SK-N-SH (cell line): ENCODE measurements at regions of chr2 and their contacts with region 1.

Region 1: GRCh38 chr2:231104115-231104713 is 20.6 kb downstream of the HTR2B start:
- DNase-seq: peak; percentile 42
- H3K4me3 ChIP-seq: no peak overlapping the region
- H3K27ac ChIP-seq: peak overlapping the region; percentile 54 to 60; a peak in 2 of 4 replicates
- H3K4me1 ChIP-seq: peaks cover 0 to 4% of the 10 kb centered on the region in 2 experiments; a peak in 2 of 4 replicates
- H3K27me3 ChIP-seq: no peaks in the 10 kb centered on the region
- CTCF ChIP-seq: peak; percentile 89
- EP300 ChIP-seq: no peak
- RAD21 ChIP-seq: peak; percentile 95

Region 2: DNA sequence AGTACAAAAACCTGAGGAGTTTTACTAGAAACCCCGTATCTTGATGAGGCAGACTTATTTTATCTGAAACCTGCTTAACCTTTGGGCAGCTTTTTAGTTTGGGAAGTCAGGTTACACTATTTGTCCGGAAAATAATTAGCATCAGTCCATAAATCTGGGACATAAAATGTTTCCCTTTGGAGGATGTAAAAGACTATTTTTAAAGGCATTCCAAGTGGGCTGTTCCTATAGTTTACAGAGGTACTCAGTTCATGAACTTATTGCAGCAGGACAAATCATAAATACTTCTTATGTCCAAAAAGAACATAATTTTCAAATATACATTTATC is 14.4 kb after region 1 on chr2:
- CTCF ChIA-PET with region 1: interaction called, 15 read pairs
- POLR2A ChIA-PET with region 1: no interaction called
- DNase-seq: no peak
- H3K4me3 ChIP-seq: no peak overlapping the region
- H3K27ac ChIP-seq: no peak overlapping the region
- H3K4me1 ChIP-seq: peaks cover 9 to 12% of the 10 kb centered on the region in 2 experiments; a peak in 3 of 4 replicates
- H3K27me3 ChIP-seq: no peaks in the 10 kb centered on the region
- CTCF ChIP-seq: no peak
- EP300 ChIP-seq: no peak
- RAD21 ChIP-seq: no peak

Region 3: GRCh38 chr2:231124838-231125568 is 20.8 kb after region 1 on chr2 and contains the start of gene HTR2B:
- CTCF ChIA-PET with region 1: interaction called, 15 read pairs
- POLR2A ChIA-PET with region 1: no interaction called
- DNase-seq: peak; percentile 62
- H3K4me3 ChIP-seq: peak within 1 kb of the TSS; percentile 12 to 42; a peak in 2 of 4 replicates
- H3K27ac ChIP-seq: peak within 1 kb of the TSS; percentile 62 to 94
- H3K4me1 ChIP-seq: peaks cover 34 to 37% of the 10 kb centered on the region in 2 experiments; a peak in 3 of 4 replicates
- H3K27me3 ChIP-seq: no peaks in the 10 kb centered on the region
- CTCF ChIP-seq: no peak
- EP300 ChIP-seq: peak in 1 of 2 experiments; percentile 51; a peak in 1 of 4 replicates
- RAD21 ChIP-seq: peak; percentile 20; the same call in 1 of the 2 replicates
- polyA plus RNA-seq, gene HTR2B: 0.25 and 0.41 TPM in 2 replicates

Region 4: GRCh38 chr2:231191896-231192872 is 88.0 kb after region 1 on chr2:
- CTCF ChIA-PET with region 1: interaction called, 162 read pairs
- POLR2A ChIA-PET with region 1: interaction called, 5 read pairs
- DNase-seq: peak; percentile 89
- H3K4me3 ChIP-seq: no peak overlapping the region
- H3K27ac ChIP-seq: peak overlapping the region; percentile 29 to 70; a peak in 3 of 4 replicates
- H3K4me1 ChIP-seq: peaks cover 7 to 15% of the 10 kb centered on the region in 2 experiments; a peak in 1 of 4 replicates
- H3K27me3 ChIP-seq: no peaks in the 10 kb centered on the region
- CTCF ChIP-seq: peak; percentile 81
- EP300 ChIP-seq: peak in 1 of 2 experiments; percentile 36; a peak in 1 of 4 replicates
- RAD21 ChIP-seq: peak; percentile 94

Region 5: GRCh38 chr2:231198291-231199173 is 94.3 kb after region 1 on chr2 and contains the start of gene ARMC9:
- CTCF ChIA-PET with region 1: interaction called, 162 read pairs
- POLR2A ChIA-PET with region 1: no interaction called
- DNase-seq: peak; percentile 99
- H3K4me3 ChIP-seq: peak within 1 kb of the TSS; percentile 77 to 83
- H3K27ac ChIP-seq: peak within 1 kb of the TSS; percentile 76 to 90
- H3K4me1 ChIP-seq: peaks cover 10 to 17% of the 10 kb centered on the region in 2 experiments; a peak in 2 of 4 replicates
- H3K27me3 ChIP-seq: no peaks in the 10 kb centered on the region
- CTCF ChIP-seq: no peak
- EP300 ChIP-seq: peak in 1 of 2 experiments; percentile 14; a peak in 1 of 4 replicates
- RAD21 ChIP-seq: no peak
- polyA plus RNA-seq, gene ARMC9: 25.3 and 38.5 TPM in 2 replicates

Region 6: GRCh38 chr2:231222318-231223055 is 118.3 kb after region 1 on chr2:
- CTCF ChIA-PET with region 1: interaction called, 27 read pairs
- POLR2A ChIA-PET with region 1: no interaction called
- DNase-seq: no peak
- H3K4me3 ChIP-seq: no peak overlapping the region
- H3K27ac ChIP-seq: no peak overlapping the region
- H3K4me1 ChIP-seq: no peaks in the 10 kb centered on the region
- H3K27me3 ChIP-seq: no peaks in the 10 kb centered on the region
- CTCF ChIP-seq: no peak
- EP300 ChIP-seq: no peak
- RAD21 ChIP-seq: no peak

Region 7: GRCh38 chr2:231452799-231453508 is 348.7 kb after region 1 on chr2:
- CTCF ChIA-PET with region 1: interaction called, 10 read pairs
- POLR2A ChIA-PET with region 1: no interaction called
- DNase-seq: no peak
- H3K4me3 ChIP-seq: no peak overlapping the region
- H3K27ac ChIP-seq: no peak overlapping the region
- H3K4me1 ChIP-seq: no peaks in the 10 kb centered on the region
- H3K27me3 ChIP-seq: no peaks in the 10 kb centered on the region
- CTCF ChIP-seq: no peak
- EP300 ChIP-seq: no peak
- RAD21 ChIP-seq: no peak